Calu3 (cell line): ENCODE measurements at regions of chr2 and their contacts with region 1.

Region 1: GRCh38 chr2:165401285-165401852 is 68.1 kb upstream of the CSRNP3 start:
- DNase-seq: peak; percentile 38
- H3K4me3 Mint-ChIP-seq: no peak overlapping the region
- H3K27ac Mint-ChIP-seq: no peak overlapping the region
- H3K4me1 Mint-ChIP-seq: peaks cover under 1% of the 10 kb centered on the region
- H3K27me3 Mint-ChIP-seq: no peaks in the 10 kb centered on the region
- CTCF ChIP-seq: peak; percentile 40

Region 2: DNA sequence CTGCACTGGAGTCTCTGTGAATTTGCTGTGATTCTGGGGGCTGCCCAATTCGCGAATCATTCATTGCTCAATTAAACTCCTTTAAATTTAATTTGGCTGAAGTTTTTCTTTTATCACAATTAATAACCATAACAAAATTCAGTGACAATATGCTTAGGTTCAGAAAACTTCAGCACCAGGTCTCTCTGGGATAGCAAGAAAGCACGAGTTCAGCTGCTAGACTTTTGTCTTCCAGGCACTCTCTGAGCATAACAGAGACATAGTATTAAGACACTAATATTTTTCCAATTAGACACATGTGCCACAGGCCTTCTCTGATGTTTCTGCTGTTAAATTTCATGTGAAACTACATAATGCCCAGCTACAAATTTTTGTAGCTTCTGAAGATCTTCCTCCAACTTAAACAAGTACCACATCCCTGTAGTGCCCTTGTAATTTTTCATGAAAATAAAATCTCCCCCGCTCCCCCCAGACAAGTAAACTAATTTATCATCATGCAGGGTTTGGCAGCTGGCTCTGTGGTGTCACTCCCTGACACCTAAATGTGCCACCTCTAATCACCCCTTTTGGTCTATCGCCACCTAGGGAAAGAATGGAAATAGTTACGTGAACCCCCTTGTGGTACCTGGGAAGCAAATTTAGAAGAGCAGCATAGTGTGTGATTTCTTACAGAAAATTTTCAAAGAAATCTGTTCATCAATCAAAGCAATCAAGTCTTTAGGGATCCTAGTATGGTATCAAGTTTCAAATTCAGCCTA is 162.3 kb after region 1 on chr2:
- CTCF ChIA-PET with region 1: no interaction called
- intact Hi-C with region 1: loop called (anchors 5 kb)
- DNase-seq: peak; percentile 13
- H3K4me3 Mint-ChIP-seq: no peak overlapping the region
- H3K27ac Mint-ChIP-seq: no peak overlapping the region
- H3K4me1 Mint-ChIP-seq: no peaks in the 10 kb centered on the region
- H3K27me3 Mint-ChIP-seq: no peaks in the 10 kb centered on the region
- CTCF ChIP-seq: peak; percentile 34

Region 3: GRCh38 chr2:165698444-165698894 is 297.1 kb after region 1 on chr2:
- CTCF ChIA-PET with region 1: no interaction called
- intact Hi-C with region 1: loop called (anchors 1 kb)
- DNase-seq: peak; percentile 38
- H3K4me3 Mint-ChIP-seq: no peak overlapping the region
- H3K27ac Mint-ChIP-seq: no peak overlapping the region
- H3K4me1 Mint-ChIP-seq: no peaks in the 10 kb centered on the region
- H3K27me3 Mint-ChIP-seq: peaks cover 12% of the 10 kb centered on the region
- CTCF ChIP-seq: no peak

Region 4: DNA sequence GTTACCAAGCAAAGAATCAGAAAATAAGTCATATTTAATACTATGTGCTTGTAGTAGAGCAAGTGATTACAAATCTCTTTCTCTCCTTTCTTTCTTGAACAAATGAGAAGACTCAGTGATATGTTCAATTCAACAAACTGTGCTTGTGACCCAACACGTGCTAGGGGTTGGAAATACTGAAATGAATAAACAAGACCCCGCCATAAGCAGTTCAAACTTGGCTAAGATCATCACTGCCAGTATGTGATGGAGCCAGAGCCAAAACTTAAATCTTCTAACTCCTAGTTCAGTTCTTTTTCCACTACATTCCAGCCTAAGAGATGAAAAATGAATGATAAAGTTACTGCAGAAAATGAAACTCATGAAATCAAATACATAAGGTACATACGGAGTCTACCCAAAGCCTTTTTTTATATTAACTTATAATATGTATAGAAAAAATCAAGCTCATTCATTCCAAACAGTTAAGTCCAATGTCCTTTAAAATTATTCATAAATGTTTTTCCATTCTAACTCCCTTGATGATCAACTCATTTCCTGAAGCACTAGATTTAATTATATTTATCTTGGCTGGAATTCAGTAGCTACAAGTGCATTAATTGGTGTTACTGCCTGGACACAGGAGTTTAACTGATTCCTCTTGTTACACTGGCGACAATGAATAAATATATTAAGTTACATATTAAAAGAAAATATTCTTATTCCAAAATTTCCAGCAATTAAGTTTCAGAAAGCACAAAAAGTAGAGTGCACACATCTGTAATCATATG is 356.7 kb after region 1 on chr2:
- CTCF ChIA-PET with region 1: no interaction called
- intact Hi-C with region 1: loop called (anchors 5 kb)
- DNase-seq: no peak
- H3K4me3 Mint-ChIP-seq: no peak overlapping the region
- H3K27ac Mint-ChIP-seq: no peak overlapping the region
- H3K4me1 Mint-ChIP-seq: peaks cover 3% of the 10 kb centered on the region
- H3K27me3 Mint-ChIP-seq: no peaks in the 10 kb centered on the region
- CTCF ChIP-seq: no peak

Region 5: DNA sequence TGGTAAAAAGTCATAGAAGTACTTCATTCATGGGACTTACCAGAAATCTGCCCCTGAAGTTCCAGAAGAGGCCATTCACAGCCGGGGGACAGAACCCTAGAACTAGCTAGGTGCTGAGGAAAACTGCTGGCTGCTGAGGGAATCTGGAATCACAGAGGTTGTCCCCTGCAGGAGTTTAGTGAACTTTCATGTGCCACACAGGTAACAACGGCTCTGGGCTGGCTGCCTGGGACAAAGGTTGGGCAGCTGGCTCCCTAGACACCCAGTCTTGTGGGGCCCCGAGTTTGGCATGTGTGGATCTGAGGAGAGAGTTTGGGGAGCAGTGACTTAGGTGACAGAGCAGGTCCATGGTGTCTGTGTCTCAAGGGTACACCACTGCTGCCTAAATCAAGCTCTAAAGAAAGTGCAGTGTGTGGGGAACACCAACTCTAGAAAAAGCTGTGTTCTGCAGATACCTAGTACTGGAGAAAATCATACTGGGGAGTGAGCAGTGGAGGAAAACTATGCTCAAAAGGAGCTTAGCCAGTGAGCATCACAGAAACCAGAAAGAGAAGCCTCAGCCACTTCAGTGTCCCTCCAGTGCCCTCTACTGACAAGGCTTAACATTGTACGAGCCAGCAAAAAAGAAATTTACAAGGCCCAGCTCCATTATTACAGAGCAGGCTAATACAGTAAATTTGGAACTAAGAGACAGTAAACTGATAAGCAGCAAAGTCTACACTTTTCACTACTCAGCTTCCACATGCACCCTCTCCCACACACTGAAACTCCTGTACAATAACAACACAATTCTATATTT is 377.5 kb after region 1 on chr2:
- CTCF ChIA-PET with region 1: no interaction called
- intact Hi-C with region 1: loop called (anchors 2 kb)
- DNase-seq: peak; percentile 43
- H3K4me3 Mint-ChIP-seq: no peak overlapping the region
- H3K27ac Mint-ChIP-seq: no peak overlapping the region
- H3K4me1 Mint-ChIP-seq: peaks cover 23% of the 10 kb centered on the region
- H3K27me3 Mint-ChIP-seq: no peaks in the 10 kb centered on the region
- CTCF ChIP-seq: peak; percentile 38